ENCODE measurements at regions of chr10 and their contacts with region 1.

Region 1: GRCh38 chr10:14604181-14605142 is 170.2 kb downstream of the FAM107B start:
- DNase-seq: peak; percentile 78
- H3K4me3 Mint-ChIP-seq: peak overlapping the region; percentile 93
- H3K27ac Mint-ChIP-seq: peak overlapping the region; percentile 97
- H3K4me1 Mint-ChIP-seq: peaks cover 60% of the 10 kb centered on the region
- H3K27me3 Mint-ChIP-seq: no peaks in the 10 kb centered on the region

Region 2: GRCh38 chr10:14385596-14386593 is 218.6 kb before region 1 on chr10:
- CTCF ChIA-PET with region 1: no interaction called
- POLR2A ChIA-PET with region 1: no interaction called
- intact Hi-C with region 1: loop called (anchors 1 kb)
- DNase-seq: peak; percentile 73
- H3K4me3 Mint-ChIP-seq: no peak overlapping the region
- H3K27ac Mint-ChIP-seq: no peak overlapping the region
- H3K4me1 Mint-ChIP-seq: peaks cover 62% of the 10 kb centered on the region
- H3K27me3 Mint-ChIP-seq: peaks cover 27% of the 10 kb centered on the region

Region 3: DNA sequence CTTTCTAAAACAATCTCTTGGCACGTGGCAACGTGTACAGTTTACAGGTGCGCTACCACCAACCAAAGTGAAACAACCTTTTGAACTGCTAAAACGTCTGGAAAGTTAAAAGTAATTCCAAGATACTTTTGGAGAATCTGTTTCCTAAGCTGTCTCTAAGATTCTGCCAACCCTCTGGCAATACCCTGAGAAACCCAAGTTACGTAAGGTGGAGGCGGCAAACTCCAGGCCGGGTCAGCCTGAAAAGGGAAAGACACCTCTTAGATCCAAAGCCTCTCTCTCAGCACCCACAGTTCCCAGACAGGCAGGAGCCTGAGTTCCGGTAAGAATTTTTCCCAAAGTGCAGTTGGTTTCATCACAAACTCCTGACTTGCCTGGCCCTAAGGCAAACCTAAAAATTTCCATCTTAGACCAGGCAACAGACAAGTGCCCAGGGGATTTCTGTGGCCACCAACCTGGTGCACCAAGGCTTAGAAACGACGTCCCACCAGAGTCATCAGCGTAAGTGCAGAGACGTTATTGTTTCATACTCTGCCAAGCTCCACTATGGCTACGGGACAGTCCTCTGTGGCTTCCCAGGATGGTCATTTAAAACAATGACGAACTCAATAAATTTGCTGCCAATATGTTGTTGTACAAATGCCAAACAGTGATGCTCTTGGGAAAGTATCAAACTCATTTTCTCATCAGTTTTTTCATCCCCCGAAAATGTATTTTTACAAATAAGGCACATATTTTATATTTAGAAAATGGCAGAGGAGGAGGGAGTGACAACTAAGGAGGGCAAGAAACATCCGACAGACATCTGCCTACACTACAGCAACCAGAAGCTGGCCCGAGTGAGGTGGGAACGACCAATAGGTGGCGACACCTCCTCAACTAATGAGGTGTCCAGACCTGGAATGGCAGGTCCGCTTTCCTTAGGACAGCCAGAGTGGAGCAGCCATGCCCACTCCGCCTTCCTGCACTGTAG is 67.9 kb before region 1 on chr10:
- CTCF ChIA-PET with region 1: no interaction called
- POLR2A ChIA-PET with region 1: no interaction called
- intact Hi-C with region 1: no loop called
- DNase-seq: peak; percentile 67
- H3K4me3 Mint-ChIP-seq: no peak overlapping the region
- H3K27ac Mint-ChIP-seq: peak overlapping the region; percentile 19
- H3K4me1 Mint-ChIP-seq: peaks cover 83% of the 10 kb centered on the region
- H3K27me3 Mint-ChIP-seq: no peaks in the 10 kb centered on the region

Region 4: GRCh38 chr10:14556285-14556956 is 48.0 kb before region 1 on chr10:
- CTCF ChIA-PET with region 1: interaction called, 3 read pairs
- POLR2A ChIA-PET with region 1: interaction called, 3 read pairs
- intact Hi-C with region 1: loop called (anchors 1 kb)
- DNase-seq: peak; percentile 61
- H3K4me3 Mint-ChIP-seq: peak overlapping the region; percentile 25
- H3K27ac Mint-ChIP-seq: peak overlapping the region; percentile 83
- H3K4me1 Mint-ChIP-seq: peaks cover 95% of the 10 kb centered on the region
- H3K27me3 Mint-ChIP-seq: no peaks in the 10 kb centered on the region

Region 5: GRCh38 chr10:14648005-14648765 is 43.7 kb after region 1 on chr10:
- CTCF ChIA-PET with region 1: interaction called, 3 read pairs
- POLR2A ChIA-PET with region 1: interaction called, 23 read pairs
- intact Hi-C with region 1: loop called (anchors 1 kb)
- DNase-seq: peak; percentile 81
- H3K4me3 Mint-ChIP-seq: peak overlapping the region; percentile 75
- H3K27ac Mint-ChIP-seq: peak overlapping the region; percentile 98
- H3K4me1 Mint-ChIP-seq: peaks cover 77% of the 10 kb centered on the region
- H3K27me3 Mint-ChIP-seq: no peaks in the 10 kb centered on the region

Region 6: DNA sequence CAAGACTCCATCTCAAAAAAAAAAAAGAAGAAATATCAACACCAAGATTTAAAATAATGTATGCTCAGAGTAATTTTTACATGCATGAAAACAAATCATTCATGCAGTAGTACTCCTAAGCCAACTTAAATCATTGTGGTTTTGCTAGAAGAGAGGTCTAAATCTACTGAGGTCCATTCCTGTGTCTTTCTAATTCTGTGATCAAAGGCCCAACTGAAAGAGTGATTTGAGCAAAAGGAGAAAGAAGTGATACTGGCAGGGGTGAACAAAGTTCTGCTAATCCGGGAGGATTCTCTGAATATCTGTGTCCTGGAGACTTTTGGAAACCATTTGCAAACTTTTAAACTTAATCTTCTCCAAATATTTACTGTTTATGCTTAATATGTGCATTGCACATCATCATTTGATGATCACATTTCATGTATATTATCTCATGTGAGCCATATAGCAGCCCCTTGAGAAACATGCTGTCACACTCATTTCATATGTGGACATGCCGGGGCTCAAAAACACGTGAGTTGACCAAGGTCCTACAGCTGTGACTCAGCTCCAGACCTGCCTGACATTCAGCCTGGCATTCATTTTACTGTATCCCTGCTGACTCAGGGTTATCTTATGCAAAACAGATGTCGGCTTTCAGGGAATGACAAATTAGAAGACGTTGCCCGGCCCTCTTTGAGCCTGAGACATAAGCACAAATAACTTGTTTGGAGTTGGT is 93.8 kb after region 1 on chr10:
- CTCF ChIA-PET with region 1: no interaction called
- POLR2A ChIA-PET with region 1: no interaction called
- intact Hi-C with region 1: no loop called
- DNase-seq: no peak
- H3K4me3 Mint-ChIP-seq: no peak overlapping the region
- H3K27ac Mint-ChIP-seq: no peak overlapping the region
- H3K4me1 Mint-ChIP-seq: no peaks in the 10 kb centered on the region
- H3K27me3 Mint-ChIP-seq: no peaks in the 10 kb centered on the region

Region 7: GRCh38 chr10:14822879-14823755 is 218.7 kb after region 1 on chr10:
- CTCF ChIA-PET with region 1: interaction called, 4 read pairs
- POLR2A ChIA-PET with region 1: no interaction called
- intact Hi-C with region 1: loop called (anchors 5 kb)
- DNase-seq: peak; percentile 56
- H3K4me3 Mint-ChIP-seq: no peak overlapping the region
- H3K27ac Mint-ChIP-seq: no peak overlapping the region
- H3K4me1 Mint-ChIP-seq: peaks cover 2% of the 10 kb centered on the region
- H3K27me3 Mint-ChIP-seq: peaks cover 1% of the 10 kb centered on the region

Region 8: GRCh38 chr10:14954001-14954770 is 349.7 kb after region 1 on chr10 and contains the start of gene DCLRE1C:
- CTCF ChIA-PET with region 1: no interaction called
- POLR2A ChIA-PET with region 1: no interaction called
- intact Hi-C with region 1: loop called (anchors 5 kb)
- DNase-seq: peak; percentile 93
- H3K4me3 Mint-ChIP-seq: peak within 1 kb of the TSS; percentile 91
- H3K27ac Mint-ChIP-seq: peak within 1 kb of the TSS; percentile 96
- H3K4me1 Mint-ChIP-seq: peaks cover 47% of the 10 kb centered on the region
- H3K27me3 Mint-ChIP-seq: no peaks in the 10 kb centered on the region
- total RNA-seq, gene DCLRE1C: 17.2 to 18.3 TPM

Measured in activated CD4-positive, alpha-beta memory T cell treated with anti-CD3 and anti-CD28 coated beads for 36 hours (primary cell).